Activated CD8-positive, alpha-beta memory T cell treated with anti-CD3 and anti-CD28 coated beads, Interleukin-2, amount 10 ng/mL, durations not matched to agents 7 days and 5 days (primary cell): ENCODE measurements at regions of chr2 and their contacts with region 1.

Region 1: GRCh38 chr2:196159221-196159892 is 12.0 kb downstream of the STK17B start:
- DNase-seq: peak; percentile 80
- ATAC-seq: peak; percentile 34
- H3K4me3 Mint-ChIP-seq: peak overlapping the region; percentile 99
- H3K27ac Mint-ChIP-seq: peak overlapping the region; percentile 93
- H3K4me1 Mint-ChIP-seq: peaks cover 60% of the 10 kb centered on the region
- H3K27me3 Mint-ChIP-seq: no peaks in the 10 kb centered on the region

Region 2: DNA sequence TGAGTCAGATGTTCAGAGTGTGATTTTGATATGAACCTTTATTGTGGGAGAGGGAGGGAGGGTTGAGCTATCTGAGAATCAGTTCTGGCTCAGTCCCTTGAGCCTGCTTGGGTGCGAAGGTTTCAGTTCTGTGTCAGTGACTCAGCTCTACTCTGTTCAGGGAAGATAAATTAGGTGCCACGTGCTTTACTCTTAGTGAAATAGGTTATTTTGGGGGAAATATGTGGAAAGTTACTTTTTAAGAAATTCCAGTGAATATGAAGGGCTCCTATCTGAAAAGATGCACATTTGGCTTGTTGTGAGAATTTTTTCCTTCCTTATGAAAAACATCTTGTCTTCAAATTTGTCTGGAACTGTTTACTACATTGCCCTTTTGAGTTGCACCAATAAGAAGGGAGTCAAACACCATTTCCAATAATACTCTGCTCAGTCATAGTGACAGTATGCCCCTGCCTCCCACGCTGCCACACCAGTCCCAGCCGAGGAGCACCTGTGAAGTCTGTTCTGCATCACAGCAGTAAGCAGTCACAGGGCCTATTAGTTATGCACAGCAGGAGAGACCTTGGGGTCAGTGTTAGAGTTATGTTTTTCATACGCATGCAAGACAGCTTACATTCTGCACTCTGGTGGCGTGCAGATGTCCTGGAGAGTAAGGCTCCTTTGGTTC is 57.9 kb before region 1 on chr2:
- CTCF ChIA-PET with region 1: no interaction called
- DNase-seq: no peak
- ATAC-seq: peak; percentile 76
- H3K4me3 Mint-ChIP-seq: no peak overlapping the region
- H3K27ac Mint-ChIP-seq: no peak overlapping the region
- H3K4me1 Mint-ChIP-seq: peaks cover 14% of the 10 kb centered on the region
- H3K27me3 Mint-ChIP-seq: no peaks in the 10 kb centered on the region

Region 3: DNA sequence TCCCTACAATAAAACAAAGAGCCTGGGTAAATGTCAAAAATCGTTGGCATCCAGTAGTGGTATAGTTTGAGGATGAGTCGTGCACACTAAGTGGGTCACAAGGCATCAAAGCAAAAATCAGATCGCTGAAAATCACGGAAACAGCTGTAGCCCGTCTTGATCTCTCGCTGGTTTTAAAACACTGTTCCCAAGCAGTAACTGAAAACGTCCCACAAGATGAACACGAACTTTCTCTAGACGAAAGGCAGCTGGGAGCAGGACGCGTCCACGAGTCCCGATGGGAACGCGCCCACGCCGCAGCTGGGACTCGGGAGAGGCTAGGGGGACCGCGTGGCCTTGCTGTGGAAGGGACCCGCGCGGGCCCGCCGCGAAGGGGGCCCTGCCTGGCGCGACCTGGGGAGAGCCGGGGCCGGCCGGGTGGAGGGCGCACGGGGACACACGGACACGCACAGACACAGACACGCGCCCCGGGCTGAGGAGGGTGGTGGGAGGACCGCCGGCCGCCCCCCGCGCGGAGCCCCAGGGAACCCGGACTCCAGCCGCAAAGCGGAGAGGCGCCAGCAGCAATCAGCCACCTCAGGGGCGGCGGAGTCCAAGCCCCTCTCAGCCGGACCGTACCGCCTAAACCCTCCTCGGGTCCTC is 11.4 kb after region 1 on chr2:
- CTCF ChIA-PET with region 1: interaction called, 12 read pairs
- DNase-seq: no peak
- ATAC-seq: peak; percentile 5
- H3K4me3 Mint-ChIP-seq: peak overlapping the region; percentile 99
- H3K27ac Mint-ChIP-seq: peak overlapping the region; percentile 98
- H3K4me1 Mint-ChIP-seq: peaks cover 35% of the 10 kb centered on the region
- H3K27me3 Mint-ChIP-seq: no peaks in the 10 kb centered on the region

Region 4: GRCh38 chr2:196277002-196277401 is 117.6 kb after region 1 on chr2:
- CTCF ChIA-PET with region 1: interaction called, 15 read pairs
- DNase-seq: no peak
- ATAC-seq: peak; percentile 31
- H3K4me3 Mint-ChIP-seq: peak overlapping the region; percentile 11
- H3K27ac Mint-ChIP-seq: peak overlapping the region; percentile 52
- H3K4me1 Mint-ChIP-seq: peaks cover 42% of the 10 kb centered on the region
- H3K27me3 Mint-ChIP-seq: no peaks in the 10 kb centered on the region

Region 5: DNA sequence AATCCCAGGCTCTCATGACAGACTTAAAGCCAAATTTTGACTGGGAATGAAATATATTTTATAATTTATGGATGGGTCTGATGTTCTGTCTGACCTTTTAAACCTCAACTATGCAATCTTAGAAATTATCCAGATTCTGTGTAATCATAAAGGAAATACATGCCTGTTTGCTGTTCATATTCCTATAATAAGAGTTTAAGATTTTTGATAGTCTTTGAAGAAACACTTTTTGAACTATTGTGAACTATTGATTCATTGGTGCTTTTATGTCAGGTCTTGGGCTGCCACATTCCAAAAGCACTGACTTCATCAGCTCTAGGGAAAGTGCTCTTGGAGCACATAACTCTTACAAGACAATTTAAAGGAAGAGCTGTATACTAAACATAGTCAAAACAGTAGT is 544.3 kb after region 1 on chr2:
- CTCF ChIA-PET with region 1: no interaction called
- DNase-seq: no peak
- ATAC-seq: no peak
- H3K4me3 Mint-ChIP-seq: no peak overlapping the region
- H3K27ac Mint-ChIP-seq: no peak overlapping the region
- H3K4me1 Mint-ChIP-seq: peaks cover 2% of the 10 kb centered on the region
- H3K27me3 Mint-ChIP-seq: no peaks in the 10 kb centered on the region